ENCODE measurements at regions of chr3 and their contacts with region 1.

Region 1: GRCh38 chr3:56076746-56077145 is 391.5 kb downstream of the ERC2 start:
- DNase-seq: no peak
- ATAC-seq: no peak
- H3K4me3 ChIP-seq: no peak overlapping the region
- H3K27ac ChIP-seq: no peak overlapping the region
- H3K4me1 ChIP-seq: no peaks in the 10 kb centered on the region
- H3K27me3 ChIP-seq: no peaks in the 10 kb centered on the region
- CTCF ChIP-seq: no peak

Region 2: GRCh38 chr3:54621184-54621583 is 1455.6 kb before region 1 on chr3:
- intact Hi-C with region 1: loop called in 1 of 10 experiments (anchors 5 kb)
- DNase-seq: no peak
- ATAC-seq: no peak
- H3K4me3 ChIP-seq: no peak overlapping the region
- H3K27ac ChIP-seq: no peak overlapping the region
- H3K4me1 ChIP-seq: no peaks in the 10 kb centered on the region
- H3K27me3 ChIP-seq: no peaks in the 10 kb centered on the region
- CTCF ChIP-seq: no peak

Region 3: GRCh38 chr3:55937301-55937700 is 139.4 kb before region 1 on chr3:
- intact Hi-C with region 1: no loop called
- DNase-seq: no peak
- ATAC-seq: no peak
- H3K4me3 ChIP-seq: no peak overlapping the region
- H3K27ac ChIP-seq: no peak overlapping the region
- H3K4me1 ChIP-seq: no peaks in the 10 kb centered on the region
- H3K27me3 ChIP-seq: peaks cover 0 to 3% (median 0%) of the 10 kb centered on the region in 7 donors
- CTCF ChIP-seq: no peak

Region 4: GRCh38 chr3:56144805-56145204 is 68.1 kb after region 1 on chr3:
- intact Hi-C with region 1: no loop called
- DNase-seq: no peak
- ATAC-seq: peak in 4 of 8 donors; percentile 38 to 83 (median 53)
- H3K4me3 ChIP-seq: no peak overlapping the region
- H3K27ac ChIP-seq: no peak overlapping the region
- H3K4me1 ChIP-seq: peaks cover 0 to 6% (median 0%) of the 10 kb centered on the region in 9 donors
- H3K27me3 ChIP-seq: no peaks in the 10 kb centered on the region
- CTCF ChIP-seq: no peak

Region 5: GRCh38 chr3:56397798-56398197 is 321.1 kb after region 1 on chr3:
- intact Hi-C with region 1: no loop called
- DNase-seq: no peak
- ATAC-seq: no peak
- H3K4me3 ChIP-seq: no peak overlapping the region
- H3K27ac ChIP-seq: no peak overlapping the region
- H3K4me1 ChIP-seq: no peaks in the 10 kb centered on the region
- H3K27me3 ChIP-seq: peaks cover 0 to 22% (median 0%) of the 10 kb centered on the region in 7 donors
- CTCF ChIP-seq: no peak

Measured in heart right ventricle (tissue), 16 donors.